Activated naive CD4-positive, alpha-beta T cell treated with anti-CD3 and anti-CD28 coated beads for 36 hours (primary cell): ENCODE measurements at regions of chr14 and their contacts with region 1.

Region 1: DNA sequence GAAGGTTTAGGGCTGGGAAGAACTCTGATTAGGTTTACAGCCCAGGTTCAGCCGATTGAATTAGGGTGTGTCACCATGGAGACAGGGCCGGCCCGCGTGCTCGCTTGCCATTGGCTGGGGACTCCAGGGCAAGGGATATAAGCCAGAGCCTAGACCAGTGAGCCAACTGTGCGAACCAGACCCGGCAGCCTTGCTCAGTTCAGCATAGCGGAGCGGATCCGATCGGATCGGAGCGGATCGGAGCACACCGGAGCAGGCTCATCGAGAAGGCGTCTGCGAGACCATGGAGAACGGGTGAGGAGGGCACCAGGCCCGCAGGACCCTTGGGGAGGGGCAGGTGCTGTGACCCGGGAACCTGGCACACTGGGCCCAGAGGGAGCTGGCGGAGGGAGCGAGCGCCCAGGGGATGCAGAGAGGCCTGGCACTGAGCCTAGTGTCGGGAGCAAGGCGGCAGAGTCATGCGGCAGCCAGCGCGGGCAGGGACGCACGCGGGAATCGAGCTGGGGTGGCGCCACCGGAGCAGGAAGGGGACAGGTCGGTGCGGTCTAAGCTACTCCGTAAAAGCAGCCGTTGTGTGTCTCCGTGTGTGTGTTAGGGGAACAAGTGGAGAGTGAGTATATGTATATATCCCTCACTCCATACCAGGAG is at the start of gene PNP:
- DNase-seq: peak; percentile 91
- H3K4me3 Mint-ChIP-seq: peak within 1 kb of the TSS; percentile 88
- H3K27ac Mint-ChIP-seq: peak within 1 kb of the TSS; percentile 97
- H3K4me1 Mint-ChIP-seq: peaks cover 36% of the 10 kb centered on the region
- H3K27me3 Mint-ChIP-seq: no peaks in the 10 kb centered on the region
- total RNA-seq, gene PNP: 187 to 191 TPM

Region 2: GRCh38 chr14:20059745-20060144 is 409.6 kb before region 1 on chr14 and contains the start of gene OR4L1:
- CTCF ChIA-PET with region 1: no interaction called
- intact Hi-C with region 1: no loop called
- DNase-seq: no peak
- H3K4me3 Mint-ChIP-seq: no peak within 1 kb of the TSS
- H3K27ac Mint-ChIP-seq: no peak within 1 kb of the TSS
- H3K4me1 Mint-ChIP-seq: peaks cover 2% of the 10 kb centered on the region
- H3K27me3 Mint-ChIP-seq: no peaks in the 10 kb centered on the region
- total RNA-seq, gene OR4L1: not detected

Region 3: GRCh38 chr14:20440882-20441281 is 28.5 kb before region 1 on chr14:
- CTCF ChIA-PET with region 1: no interaction called
- intact Hi-C with region 1: loop called (anchors 1 kb)
- DNase-seq: peak; percentile 70
- H3K4me3 Mint-ChIP-seq: peak overlapping the region; percentile 32
- H3K27ac Mint-ChIP-seq: peak overlapping the region; percentile 68
- H3K4me1 Mint-ChIP-seq: peaks cover 19% of the 10 kb centered on the region
- H3K27me3 Mint-ChIP-seq: no peaks in the 10 kb centered on the region

Region 4: GRCh38 chr14:20489093-20489994 is 20.0 kb after region 1 on chr14:
- CTCF ChIA-PET with region 1: interaction called, 7 read pairs
- intact Hi-C with region 1: loop called (anchors 1 kb)
- DNase-seq: no peak
- H3K4me3 Mint-ChIP-seq: no peak overlapping the region
- H3K27ac Mint-ChIP-seq: no peak overlapping the region
- H3K4me1 Mint-ChIP-seq: peaks cover 57% of the 10 kb centered on the region
- H3K27me3 Mint-ChIP-seq: no peaks in the 10 kb centered on the region

Region 5: DNA sequence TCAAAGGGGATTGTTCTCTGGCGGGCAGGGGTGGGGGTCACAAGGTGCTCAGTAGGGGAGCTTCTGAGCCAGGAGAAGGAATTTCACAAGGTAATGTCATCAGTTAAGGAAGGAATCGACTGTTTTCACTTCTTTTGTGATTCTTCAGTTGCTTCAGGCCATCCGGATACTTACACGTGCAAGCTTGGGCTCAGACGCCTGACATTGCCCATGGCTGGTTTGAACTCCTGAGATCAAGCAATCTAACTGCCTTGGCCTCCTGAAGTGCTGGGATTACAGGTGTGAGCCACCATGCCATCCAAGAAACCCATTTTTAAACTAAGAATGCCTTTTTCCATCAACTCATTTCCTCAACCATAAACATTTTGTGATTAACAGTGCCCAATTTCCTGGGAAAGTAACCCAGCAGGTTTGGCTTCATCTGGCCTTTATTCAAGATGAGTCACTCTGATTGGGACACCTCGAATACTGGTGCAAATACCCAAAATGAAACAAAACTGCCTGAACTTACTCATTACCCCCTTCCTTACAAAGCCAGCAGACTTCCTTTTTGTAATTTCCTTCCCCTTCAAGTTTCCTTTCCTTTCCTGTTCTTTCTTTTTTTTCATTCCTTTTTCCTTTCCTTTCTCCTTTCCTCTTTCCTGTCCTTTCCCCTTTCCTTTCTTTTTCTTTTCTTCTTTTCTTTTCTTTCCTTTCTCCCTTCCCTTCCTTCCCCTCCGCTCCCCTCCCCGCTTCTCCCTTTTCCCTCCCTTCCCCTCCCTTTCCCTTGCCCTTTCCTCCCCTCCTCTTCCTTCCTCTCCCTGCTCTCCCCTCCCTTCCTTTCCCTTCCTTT is 25.8 kb after region 1 on chr14:
- CTCF ChIA-PET with region 1: interaction called, 6 read pairs
- intact Hi-C with region 1: loop called (anchors 1 kb)
- DNase-seq: peak; percentile 19
- H3K4me3 Mint-ChIP-seq: no peak overlapping the region
- H3K27ac Mint-ChIP-seq: no peak overlapping the region
- H3K4me1 Mint-ChIP-seq: peaks cover 57% of the 10 kb centered on the region
- H3K27me3 Mint-ChIP-seq: no peaks in the 10 kb centered on the region

Region 6: DNA sequence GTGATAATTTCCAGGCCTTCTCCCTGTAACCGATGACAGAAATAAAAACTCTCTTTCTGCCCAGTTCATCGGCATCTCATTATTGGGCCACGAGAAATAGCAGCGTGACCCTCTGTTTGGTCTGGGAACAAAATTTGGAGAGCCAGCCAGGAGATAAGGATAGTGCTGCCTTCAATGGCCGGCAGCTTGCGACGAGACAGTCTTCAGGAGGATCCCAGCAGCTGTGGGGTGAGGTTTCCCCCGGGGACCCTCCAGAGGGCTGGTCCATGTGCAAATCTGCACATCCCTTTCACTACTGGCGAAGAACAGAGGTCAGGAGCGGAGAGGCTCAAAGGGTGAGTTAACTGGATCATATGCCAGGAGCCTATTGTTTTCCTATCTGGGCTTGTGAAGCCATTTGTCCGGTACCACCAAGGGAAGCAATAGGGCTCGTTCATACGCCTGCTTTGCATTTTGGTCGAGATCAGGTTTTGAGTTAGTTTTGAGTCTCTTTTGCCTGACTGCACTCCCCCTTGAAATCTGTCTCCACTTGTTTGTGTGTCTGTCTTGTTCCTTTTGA is 534.5 kb after region 1 on chr14:
- CTCF ChIA-PET with region 1: no interaction called
- intact Hi-C with region 1: no loop called
- DNase-seq: no peak
- H3K4me3 Mint-ChIP-seq: no peak overlapping the region
- H3K27ac Mint-ChIP-seq: no peak overlapping the region
- H3K4me1 Mint-ChIP-seq: no peaks in the 10 kb centered on the region
- H3K27me3 Mint-ChIP-seq: no peaks in the 10 kb centered on the region

Region 7: GRCh38 chr14:21257394-21257909 is 788.1 kb after region 1 on chr14:
- CTCF ChIA-PET with region 1: no interaction called
- intact Hi-C with region 1: no loop called
- DNase-seq: no peak
- H3K4me3 Mint-ChIP-seq: peak overlapping the region; percentile 39
- H3K27ac Mint-ChIP-seq: peak overlapping the region; percentile 63
- H3K4me1 Mint-ChIP-seq: peaks cover 74% of the 10 kb centered on the region
- H3K27me3 Mint-ChIP-seq: no peaks in the 10 kb centered on the region

Region 8: DNA sequence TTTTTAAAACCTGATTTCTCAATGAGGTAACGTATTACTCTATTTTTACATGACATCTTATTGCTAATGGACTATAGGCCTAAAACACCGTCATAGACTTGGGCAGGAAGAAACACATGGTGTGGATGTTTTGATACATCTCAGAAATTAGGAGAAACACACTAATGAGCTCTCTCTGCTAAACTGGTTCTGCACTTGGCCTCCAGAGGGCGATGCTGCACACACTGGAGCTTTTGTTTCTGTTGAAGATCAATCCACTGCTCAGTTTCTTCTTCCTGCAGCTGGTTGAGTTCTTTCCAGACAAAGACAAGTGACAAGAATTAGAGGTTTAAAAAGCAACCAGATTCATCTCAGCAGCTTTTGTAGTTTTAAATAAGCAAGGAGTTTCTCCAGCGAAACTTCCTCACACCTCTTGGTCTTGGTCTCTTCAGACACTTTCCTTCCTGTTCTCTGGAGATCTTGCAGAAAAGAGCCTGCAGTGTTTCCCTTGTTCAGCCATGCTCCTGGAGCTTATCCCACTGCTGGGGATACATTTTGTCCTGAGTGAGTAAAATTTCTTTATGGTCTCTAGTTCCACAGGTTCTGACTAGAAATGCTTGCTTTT is 1382.8 kb after region 1 on chr14:
- CTCF ChIA-PET with region 1: no interaction called
- intact Hi-C with region 1: no loop called
- DNase-seq: peak; percentile 89
- H3K4me3 Mint-ChIP-seq: peak overlapping the region; percentile 68
- H3K27ac Mint-ChIP-seq: peak overlapping the region; percentile 86
- H3K4me1 Mint-ChIP-seq: peaks cover 13% of the 10 kb centered on the region
- H3K27me3 Mint-ChIP-seq: peaks cover 7% of the 10 kb centered on the region